ENCODE measurements at regions of chr5 and their contacts with region 1.

Region 1: GRCh38 chr5:55062039-55062779 is 38.2 kb downstream of the GZMK start:
- DNase-seq: peak; percentile 82
- ATAC-seq: peak; percentile 80
- H3K4me3 Mint-ChIP-seq: peak overlapping the region; percentile 70
- H3K27ac Mint-ChIP-seq: peak overlapping the region; percentile 94
- H3K4me1 Mint-ChIP-seq: peaks cover 61% of the 10 kb centered on the region
- H3K27me3 Mint-ChIP-seq: peaks cover 2% of the 10 kb centered on the region
- CTCF ChIP-seq: no peak

Region 2: GRCh38 chr5:54317511-54318260 is 744.5 kb before region 1 on chr5:
- CTCF ChIA-PET with region 1: no interaction called
- POLR2A ChIA-PET with region 1: no interaction called
- intact Hi-C with region 1: no loop called
- DNase-seq: no peak
- ATAC-seq: no peak
- H3K4me3 Mint-ChIP-seq: no peak overlapping the region
- H3K27ac Mint-ChIP-seq: no peak overlapping the region
- H3K4me1 Mint-ChIP-seq: no peaks in the 10 kb centered on the region
- H3K27me3 Mint-ChIP-seq: peaks cover 17% of the 10 kb centered on the region
- CTCF ChIP-seq: no peak

Region 3: GRCh38 chr5:54930736-54931135 is 131.5 kb before region 1 on chr5:
- CTCF ChIA-PET with region 1: no interaction called
- POLR2A ChIA-PET with region 1: no interaction called
- intact Hi-C with region 1: no loop called
- DNase-seq: peak; percentile 54
- ATAC-seq: peak; percentile 64
- H3K4me3 Mint-ChIP-seq: no peak overlapping the region
- H3K27ac Mint-ChIP-seq: no peak overlapping the region
- H3K4me1 Mint-ChIP-seq: peaks cover 8% of the 10 kb centered on the region
- H3K27me3 Mint-ChIP-seq: peaks cover 14% of the 10 kb centered on the region
- CTCF ChIP-seq: no peak

Region 4: DNA sequence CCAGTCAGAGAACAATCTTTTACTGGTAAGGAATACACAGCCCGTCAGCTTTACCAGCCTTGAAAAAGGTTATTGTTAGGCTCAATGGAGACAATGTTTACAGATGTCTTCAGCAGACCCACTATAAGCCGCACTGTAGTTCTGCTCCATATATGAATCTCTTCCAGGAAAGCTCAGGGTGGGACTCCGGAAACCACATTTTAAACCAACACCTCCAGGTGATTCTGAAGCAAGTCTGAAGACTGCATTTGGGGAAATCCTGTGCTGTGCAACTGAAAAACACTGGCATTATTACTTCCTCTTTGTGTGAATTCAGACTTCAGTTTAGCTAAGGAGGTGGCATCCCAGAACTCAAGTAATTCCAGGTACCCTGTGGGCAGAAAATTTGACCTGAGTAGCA is 34.6 kb before region 1 on chr5:
- CTCF ChIA-PET with region 1: no interaction called
- POLR2A ChIA-PET with region 1: no interaction called
- intact Hi-C with region 1: loop called (anchors 5 kb)
- DNase-seq: peak; percentile 54
- ATAC-seq: peak; percentile 72
- H3K4me3 Mint-ChIP-seq: peak overlapping the region; percentile 12
- H3K27ac Mint-ChIP-seq: peak overlapping the region; percentile 80
- H3K4me1 Mint-ChIP-seq: peaks cover 64% of the 10 kb centered on the region
- H3K27me3 Mint-ChIP-seq: no peaks in the 10 kb centered on the region
- CTCF ChIP-seq: no peak

Region 5: DNA sequence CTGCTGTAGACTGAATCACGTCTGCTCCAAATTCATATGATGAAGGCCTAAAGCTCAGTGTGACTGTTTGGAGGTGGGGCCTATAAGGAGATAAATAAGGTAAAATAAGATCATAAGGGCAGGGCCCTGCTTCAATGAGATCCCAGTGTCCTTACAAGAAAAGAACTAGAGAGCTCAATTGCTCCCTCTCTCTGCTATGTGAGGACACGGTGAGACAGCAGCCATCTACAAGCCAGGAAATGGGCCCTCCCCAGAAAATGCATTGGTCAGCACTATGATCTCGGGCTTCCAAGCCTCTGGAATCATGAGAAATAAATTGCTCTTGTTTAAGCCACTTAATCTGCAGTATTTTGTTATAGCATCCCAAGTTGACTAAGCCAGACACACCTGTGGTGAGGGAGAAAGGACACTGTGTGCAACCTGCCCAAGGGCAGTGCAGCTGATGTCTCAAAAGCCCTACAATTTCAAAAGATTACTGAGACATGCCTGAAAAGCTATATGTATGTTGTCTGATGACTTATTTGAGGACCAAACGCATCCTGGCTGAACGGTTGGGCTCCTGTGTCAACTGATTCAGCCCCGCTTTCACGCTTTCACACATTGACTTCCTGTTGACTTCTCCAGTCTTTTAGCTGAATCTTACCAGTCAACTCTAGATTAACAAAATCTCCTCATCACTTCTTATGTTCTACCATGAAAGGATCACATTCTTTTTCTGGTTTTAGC is 25.0 kb before region 1 on chr5:
- CTCF ChIA-PET with region 1: interaction called, 13 read pairs
- POLR2A ChIA-PET with region 1: interaction called, 4 read pairs
- intact Hi-C with region 1: no loop called
- DNase-seq: peak; percentile 89
- ATAC-seq: peak; percentile 94
- H3K4me3 Mint-ChIP-seq: peak overlapping the region; percentile 13
- H3K27ac Mint-ChIP-seq: peak overlapping the region; percentile 84
- H3K4me1 Mint-ChIP-seq: peaks cover 37% of the 10 kb centered on the region
- H3K27me3 Mint-ChIP-seq: no peaks in the 10 kb centered on the region
- CTCF ChIP-seq: no peak

Region 6: DNA sequence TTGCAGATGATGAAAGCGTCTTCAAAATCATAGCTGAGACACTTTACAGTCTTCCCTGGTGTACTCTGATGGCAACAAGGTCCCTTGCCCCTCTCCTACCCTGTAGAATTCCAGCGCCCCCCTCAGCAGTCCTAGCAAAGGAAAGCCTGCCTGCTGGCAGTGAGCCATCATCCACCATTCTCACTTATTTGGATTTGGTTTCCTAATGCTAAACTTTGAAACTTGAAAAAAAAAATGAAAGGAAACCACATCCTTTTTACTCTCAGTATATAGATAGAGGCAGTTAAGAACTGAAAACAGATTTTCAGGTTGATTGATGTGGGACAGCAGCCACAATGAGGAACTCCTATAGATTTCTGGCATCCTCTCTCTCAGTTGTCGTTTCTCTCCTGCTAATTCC is 40.1 kb after region 1 on chr5 and contains the start of gene GZMA:
- CTCF ChIA-PET with region 1: no interaction called
- POLR2A ChIA-PET with region 1: no interaction called
- intact Hi-C with region 1: loop called (anchors 5 kb)
- DNase-seq: peak; percentile 36
- ATAC-seq: peak; percentile 64
- H3K4me3 Mint-ChIP-seq: peak within 1 kb of the TSS; percentile 59
- H3K27ac Mint-ChIP-seq: peak within 1 kb of the TSS; percentile 84
- H3K4me1 Mint-ChIP-seq: peaks cover 78% of the 10 kb centered on the region
- H3K27me3 Mint-ChIP-seq: peaks cover 10% of the 10 kb centered on the region
- CTCF ChIP-seq: no peak
- total RNA-seq, gene GZMA: 17.8 to 18.2 TPM

Measured in activated CD8-positive, alpha-beta T cell treated with anti-CD3 and anti-CD28 coated beads for 36 hours (primary cell).